Heart right ventricle (tissue), 16 donors: ENCODE measurements at regions of chr2 and their contacts with region 1.

Region 1: GRCh38 chr2:131168538-131168937 is 40.8 kb upstream of the POTEE start:
- DNase-seq: no peak
- ATAC-seq: no peak
- H3K4me3 ChIP-seq: no peak overlapping the region
- H3K27ac ChIP-seq: no peak overlapping the region
- H3K4me1 ChIP-seq: no peaks in the 10 kb centered on the region
- H3K27me3 ChIP-seq: peaks cover 0 to 23% (median 4%) of the 10 kb centered on the region in 7 donors
- CTCF ChIP-seq: no peak

Region 2: DNA sequence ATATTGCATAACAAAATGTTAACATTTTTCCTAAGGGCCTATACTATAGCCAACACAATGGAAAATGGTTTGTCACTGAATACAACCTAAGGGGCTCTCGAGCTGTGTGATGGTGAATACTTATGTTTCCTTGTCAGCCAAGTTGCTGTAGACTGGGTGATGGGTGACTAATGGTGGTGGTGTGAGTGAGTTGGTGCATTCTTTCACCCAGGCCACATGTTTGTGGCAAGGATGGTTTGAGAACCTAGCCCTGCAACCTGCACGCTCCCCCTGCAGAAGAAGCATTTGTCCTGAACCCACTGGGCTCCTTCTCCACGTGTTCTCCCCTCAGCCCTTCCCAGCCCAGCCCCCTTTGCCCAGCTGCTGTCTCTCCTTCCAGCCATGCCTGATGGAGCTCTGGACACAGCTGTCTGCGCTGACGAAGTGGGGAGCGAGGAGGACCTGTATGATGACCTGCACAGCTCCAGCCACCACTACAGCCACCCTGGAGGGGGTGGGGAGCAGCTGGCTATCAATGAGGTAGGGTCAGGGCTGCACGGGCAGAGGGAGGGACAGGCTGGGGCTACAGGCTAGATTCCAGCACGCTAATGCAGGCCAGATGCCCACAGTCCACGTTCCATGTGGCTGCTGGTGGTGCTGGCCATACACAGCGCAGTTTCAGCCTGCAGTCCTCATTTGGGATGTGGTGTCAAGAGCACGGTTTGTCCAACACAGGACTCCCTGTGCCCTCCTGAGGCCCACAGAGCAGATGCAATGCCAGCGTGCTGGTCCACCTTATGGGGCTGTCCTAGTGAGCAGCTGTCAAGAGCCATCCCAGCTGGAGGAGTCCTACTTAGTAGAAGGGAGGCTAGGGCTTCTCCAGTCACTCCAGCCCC is 140.7 kb before region 1 on chr2:
- intact Hi-C with region 1: loop called in 1 of 10 experiments (anchors 5 kb)
- DNase-seq: no peak
- ATAC-seq: no peak
- H3K4me3 ChIP-seq: no peak overlapping the region
- H3K27ac ChIP-seq: no peak overlapping the region
- H3K4me1 ChIP-seq: no peaks in the 10 kb centered on the region
- H3K27me3 ChIP-seq: peaks cover 0 to 14% (median 9%) of the 10 kb centered on the region in 7 donors
- CTCF ChIP-seq: no peak